ENCODE measurements at regions of chr4 and their contacts with region 1.

Region 1: DNA sequence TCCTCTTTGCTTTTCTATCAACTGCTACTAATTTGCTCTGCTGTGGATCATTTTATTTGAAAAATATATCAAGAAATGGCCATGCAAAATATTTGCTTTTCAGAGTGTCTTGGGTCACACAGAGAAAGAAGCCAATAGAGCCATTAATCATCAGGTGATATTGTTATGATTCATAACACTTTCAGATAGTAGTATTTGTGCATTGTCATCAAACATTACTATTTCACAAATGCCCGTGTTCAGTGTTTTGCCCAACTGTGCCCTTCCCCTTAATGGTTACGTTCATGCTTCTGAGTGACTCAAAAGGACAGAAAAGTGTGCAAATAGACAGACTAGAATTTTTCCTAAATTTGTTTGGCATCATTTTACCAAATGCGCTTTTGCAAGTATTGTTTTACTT is 46.6 kb downstream of the PHOX2B start:
- DNase-seq: no peak
- H3K4me3 ChIP-seq: no peak overlapping the region
- H3K27ac ChIP-seq: no peak overlapping the region
- H3K4me1 ChIP-seq: no peaks in the 10 kb centered on the region
- H3K27me3 ChIP-seq: peaks cover 9 to 22% of the 10 kb centered on the region in 2 experiments
- CTCF ChIP-seq: no peak
- POLR2A ChIP-seq: no peak

Region 2: GRCh38 chr4:41725254-41725653 is 23.3 kb after region 1 on chr4:
- CTCF ChIA-PET with region 1: interaction called, 3 read pairs
- POLR2A ChIA-PET with region 1: no interaction called
- dilution Hi-C with region 1: no loop called
- intact Hi-C with region 1: loop called (anchors 1 kb)
- DNase-seq: no peak
- H3K4me3 ChIP-seq: no peak overlapping the region
- H3K27ac ChIP-seq: no peak overlapping the region
- H3K4me1 ChIP-seq: no peaks in the 10 kb centered on the region
- H3K27me3 ChIP-seq: peaks cover 1 to 8% of the 10 kb centered on the region in 2 experiments
- CTCF ChIP-seq: peak in 1 of 2 donors; percentile 8
- POLR2A ChIP-seq: no peak